ENCODE measurements at regions of chr6 and their contacts with region 1.

Region 1: DNA sequence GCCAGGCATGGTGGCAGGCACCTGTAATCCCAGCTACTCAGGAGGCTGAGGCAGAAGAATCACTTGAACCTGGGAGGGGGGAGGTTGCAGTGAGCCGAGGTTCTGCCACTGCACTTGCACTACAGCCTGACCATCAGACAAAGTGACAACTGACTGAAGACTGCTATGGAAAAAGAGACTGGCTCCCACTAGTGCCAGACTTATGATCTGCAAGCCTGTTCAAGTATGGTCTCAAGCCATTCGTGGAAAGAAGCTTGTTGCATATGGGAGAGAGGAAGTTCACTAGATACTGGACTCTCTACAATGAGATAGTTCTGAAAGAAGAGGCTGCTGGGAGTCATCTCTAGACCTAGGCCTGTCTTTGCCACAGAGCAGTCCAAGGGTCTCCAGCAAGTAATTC is 26.7 kb downstream of the MDN1 start:
- DNase-seq: no peak
- H3K4me3 ChIP-seq: no peak overlapping the region
- H3K27ac ChIP-seq: no peak overlapping the region
- H3K4me1 ChIP-seq: no peaks in the 10 kb centered on the region
- H3K27me3 ChIP-seq: no peaks in the 10 kb centered on the region
- CTCF ChIP-seq: peak; percentile 49; the same call in 1 of the 2 replicates

Region 2: GRCh38 chr6:89675949-89676748 is 116.7 kb before region 1 on chr6:
- CTCF ChIA-PET with region 1: interaction called, 13 read pairs
- POLR2A ChIA-PET with region 1: no interaction called
- intact Hi-C with region 1: no loop called
- DNase-seq: no peak
- H3K4me3 ChIP-seq: no peak overlapping the region
- H3K27ac ChIP-seq: no peak overlapping the region
- H3K4me1 ChIP-seq: no peaks in the 10 kb centered on the region
- H3K27me3 ChIP-seq: no peaks in the 10 kb centered on the region
- CTCF ChIP-seq: no peak